ENCODE measurements at regions of chr18 and their contacts with region 1.

Region 1: DNA sequence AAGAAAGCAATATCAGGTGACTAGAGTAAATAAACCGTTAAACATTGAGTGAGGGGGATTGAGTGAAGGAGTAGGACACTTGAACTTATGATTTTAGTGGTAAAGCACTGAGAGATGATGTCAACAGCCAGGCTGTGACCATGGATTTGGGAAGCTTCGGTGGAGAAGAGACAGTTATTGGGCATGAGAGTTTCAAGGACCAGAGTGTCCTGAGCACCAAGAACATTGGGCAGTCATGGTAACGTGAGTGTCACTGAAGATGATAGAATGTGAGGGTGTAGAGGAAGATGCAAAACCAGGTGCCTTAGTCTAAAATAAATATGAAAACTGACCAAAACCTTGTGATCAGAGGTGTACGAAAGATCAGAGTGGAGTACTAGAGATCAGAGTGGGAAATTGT is 248.1 kb downstream of the ASXL3 start:
- DNase-seq: no peak
- H3K4me3 Mint-ChIP-seq: no peak overlapping the region
- H3K27ac Mint-ChIP-seq: no peak overlapping the region
- H3K4me1 Mint-ChIP-seq: peaks cover 4% of the 10 kb centered on the region
- H3K27me3 Mint-ChIP-seq: no peaks in the 10 kb centered on the region
- CTCF ChIP-seq: no peak

Region 2: GRCh38 chr18:33839441-33840211 is 13.5 kb after region 1 on chr18:
- CTCF ChIA-PET with region 1: interaction called, 10 read pairs
- POLR2A ChIA-PET with region 1: no interaction called
- intact Hi-C with region 1: no loop called
- DNase-seq: peak; percentile 75
- H3K4me3 Mint-ChIP-seq: no peak overlapping the region
- H3K27ac Mint-ChIP-seq: no peak overlapping the region
- H3K4me1 Mint-ChIP-seq: no peaks in the 10 kb centered on the region
- H3K27me3 Mint-ChIP-seq: no peaks in the 10 kb centered on the region
- CTCF ChIP-seq: peak; percentile 55